HEK293 (cell line): ENCODE measurements at regions of chr7 and their contacts with region 1.

Region 1: DNA sequence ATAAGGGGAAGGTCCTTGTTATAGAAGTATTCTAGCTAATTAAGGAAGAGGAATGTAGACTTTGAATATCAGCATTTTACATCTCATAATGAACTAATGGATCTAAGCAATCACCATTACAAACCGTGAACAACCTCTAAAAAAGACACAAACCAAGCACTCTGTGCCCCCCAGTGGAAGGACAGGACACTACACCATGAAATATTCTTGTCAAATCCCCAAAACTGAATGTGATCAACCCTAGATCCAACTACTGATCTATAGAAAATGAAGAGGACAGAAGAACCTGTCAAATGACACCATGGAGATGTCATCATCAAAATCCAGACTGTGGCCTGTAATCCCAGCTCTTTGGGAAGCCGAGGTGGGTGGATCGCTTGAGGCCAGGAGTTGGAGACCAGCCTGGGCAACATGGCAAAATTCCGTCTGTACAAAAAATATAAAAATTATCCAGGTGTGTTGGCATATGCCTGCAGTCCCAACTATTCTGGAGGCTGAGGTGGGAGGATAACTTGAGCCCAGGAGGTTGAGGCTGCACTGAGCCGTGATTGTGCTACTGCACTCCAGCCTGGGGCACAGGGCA is 111.3 kb upstream of the CARD11 start:
- H3K4me3 ChIP-seq: no peak overlapping the region
- H3K27ac ChIP-seq: no peak overlapping the region
- H3K4me1 ChIP-seq: no peaks in the 10 kb centered on the region; the same call in 1 of the 2 replicates
- CTCF ChIP-seq: peak; percentile 41; the same call in 1 of the 2 replicates

Region 2: DNA sequence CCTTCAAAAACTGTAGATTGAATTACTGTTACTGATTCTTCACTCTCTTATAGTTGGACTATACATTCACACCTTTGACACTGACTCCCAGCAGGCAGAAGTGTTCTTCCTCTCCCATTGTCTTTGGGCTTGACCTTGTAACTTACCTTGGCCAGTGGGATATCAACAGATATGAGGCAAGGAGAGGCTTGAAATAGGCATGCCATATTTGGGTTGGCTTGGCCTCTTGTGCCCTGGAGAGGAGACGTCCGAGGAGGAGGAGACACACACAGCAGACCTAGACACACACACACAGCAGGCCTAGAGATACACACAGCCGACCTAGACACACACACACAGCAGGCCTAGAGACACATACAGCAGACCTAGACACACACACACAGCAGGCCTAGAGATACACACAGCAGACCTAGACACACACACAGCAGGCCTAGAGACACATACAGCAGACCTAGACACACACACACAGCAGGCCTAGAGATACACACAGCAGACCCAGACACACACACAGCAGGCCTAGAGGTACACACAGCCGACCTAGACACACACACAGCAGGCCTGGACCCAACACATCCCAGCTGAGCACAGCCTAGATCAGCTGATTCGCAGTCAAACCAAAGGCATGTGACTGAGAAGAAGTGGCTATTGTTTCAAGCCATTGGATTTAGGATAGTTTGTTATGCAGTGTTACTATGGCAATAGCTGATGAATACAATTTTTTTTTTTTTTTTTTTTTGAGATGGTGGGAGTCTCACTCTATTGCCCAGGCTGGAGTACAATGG is 298.4 kb before region 1 on chr7:
- CTCF ChIA-PET with region 1: interaction called, 10 read pairs
- POLR2A ChIA-PET with region 1: no interaction called
- H3K4me3 ChIP-seq: no peak overlapping the region
- H3K27ac ChIP-seq: no peak overlapping the region
- H3K4me1 ChIP-seq: no peaks in the 10 kb centered on the region
- CTCF ChIP-seq: no peak

Region 3: GRCh38 chr7:3065724-3066143 is 89.3 kb before region 1 on chr7:
- CTCF ChIA-PET with region 1: interaction called, 29 read pairs
- POLR2A ChIA-PET with region 1: no interaction called
- H3K4me3 ChIP-seq: no peak overlapping the region
- H3K27ac ChIP-seq: no peak overlapping the region
- H3K4me1 ChIP-seq: no peaks in the 10 kb centered on the region
- CTCF ChIP-seq: 0 out of 2 replicates have a peak, but pooled peaks have one; percentile 17